Posterior vena cava (tissue), 2 donors: ENCODE measurements at regions of chr12 and their contacts with region 1.

Region 1: DNA sequence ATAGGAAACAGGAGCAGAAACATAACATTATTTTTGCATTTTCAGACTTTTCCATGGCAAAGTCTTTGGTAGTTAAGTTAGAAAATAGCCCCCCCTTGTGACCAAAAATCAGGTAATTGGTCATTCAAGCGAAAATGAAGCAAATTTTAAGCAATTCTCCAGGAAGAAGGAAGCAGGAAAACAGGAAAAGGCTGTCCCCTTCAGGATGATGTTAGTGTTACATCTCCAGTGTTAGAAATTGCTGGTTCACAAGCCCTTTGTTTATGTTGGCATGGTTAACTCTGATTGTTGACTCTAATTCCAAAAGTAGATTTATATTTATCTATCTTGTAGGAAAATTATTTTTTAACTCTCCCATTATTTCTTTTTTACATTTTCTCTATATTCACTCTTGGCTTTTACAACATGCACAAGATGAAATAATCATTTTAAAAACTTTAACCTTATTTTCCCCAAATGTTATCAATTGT is 18.8 kb upstream of the GAS2L3 start:
- DNase-seq: no peak

Region 2: DNA sequence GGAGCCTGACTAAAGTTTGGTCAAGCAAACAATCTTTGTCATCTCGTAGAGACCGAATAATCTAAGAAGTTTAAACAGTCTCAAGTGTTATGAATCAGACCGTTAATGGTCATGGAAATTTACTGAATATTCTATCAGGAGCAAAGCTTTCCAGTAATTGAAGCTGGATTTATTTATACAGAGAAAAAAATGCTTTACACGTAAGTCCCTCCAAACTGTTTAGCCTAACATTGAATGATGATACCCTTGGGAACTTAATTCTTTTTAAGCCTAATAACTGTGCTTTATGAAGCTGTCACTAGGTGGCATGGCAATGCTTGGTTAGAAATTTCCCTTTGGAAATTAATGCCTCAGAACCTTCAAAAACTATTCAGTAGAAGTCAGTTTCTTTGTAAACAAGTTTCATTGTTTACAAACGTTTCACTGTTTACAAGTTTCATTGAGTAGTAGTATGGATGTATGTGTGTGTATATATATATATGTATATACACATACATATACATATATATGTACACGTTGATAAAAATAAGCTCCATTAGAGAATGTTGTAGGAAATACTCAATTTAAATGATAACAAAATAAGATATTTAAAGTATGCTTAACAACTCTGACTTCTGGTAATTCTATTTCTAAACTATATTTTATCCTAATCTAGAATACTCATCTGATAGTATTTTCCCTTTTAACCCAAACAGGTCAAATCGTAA is 319.9 kb before region 1 on chr12:
- intact Hi-C with region 1: loop called in 1 of 2 experiments (anchors 10 kb)
- DNase-seq: no peak

Region 3: DNA sequence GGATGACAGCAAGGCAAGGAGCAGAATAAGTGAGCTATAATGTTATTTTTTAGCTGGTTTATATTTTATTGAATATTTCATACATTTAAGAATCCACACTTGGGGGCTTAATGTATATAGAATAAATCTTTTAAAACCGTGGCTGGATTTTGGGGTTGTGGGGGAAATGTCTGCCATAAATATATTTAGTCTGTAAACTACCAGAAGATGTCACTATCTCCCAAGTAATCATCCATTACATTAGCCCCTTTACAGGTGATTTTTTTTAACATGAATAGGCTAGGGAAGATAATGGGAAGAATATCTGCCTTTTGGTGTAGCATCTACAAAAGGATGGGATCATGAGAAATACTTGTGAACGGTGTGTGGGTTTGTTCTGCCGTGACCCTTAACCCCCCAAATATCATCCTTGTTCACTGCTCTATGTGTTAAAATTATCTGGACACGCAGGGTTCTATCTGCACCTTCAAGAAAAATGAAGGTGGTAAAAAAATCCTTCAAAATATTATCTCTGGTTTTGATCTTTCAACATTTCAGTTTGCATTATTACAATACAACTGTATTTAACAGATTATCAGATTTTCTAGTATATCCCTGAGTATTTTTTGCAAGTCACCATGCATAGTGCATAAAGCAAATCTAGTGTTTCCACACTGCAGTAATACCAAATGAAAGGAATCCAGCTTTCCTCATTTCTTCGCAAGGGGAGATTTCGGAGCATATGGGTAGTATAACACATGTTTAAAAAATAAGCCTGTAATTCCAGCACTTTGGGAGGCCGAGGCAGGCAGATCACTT is 205.8 kb before region 1 on chr12:
- intact Hi-C with region 1: loop called in 1 of 2 experiments (anchors 5 kb)
- DNase-seq: no peak

Region 4: DNA sequence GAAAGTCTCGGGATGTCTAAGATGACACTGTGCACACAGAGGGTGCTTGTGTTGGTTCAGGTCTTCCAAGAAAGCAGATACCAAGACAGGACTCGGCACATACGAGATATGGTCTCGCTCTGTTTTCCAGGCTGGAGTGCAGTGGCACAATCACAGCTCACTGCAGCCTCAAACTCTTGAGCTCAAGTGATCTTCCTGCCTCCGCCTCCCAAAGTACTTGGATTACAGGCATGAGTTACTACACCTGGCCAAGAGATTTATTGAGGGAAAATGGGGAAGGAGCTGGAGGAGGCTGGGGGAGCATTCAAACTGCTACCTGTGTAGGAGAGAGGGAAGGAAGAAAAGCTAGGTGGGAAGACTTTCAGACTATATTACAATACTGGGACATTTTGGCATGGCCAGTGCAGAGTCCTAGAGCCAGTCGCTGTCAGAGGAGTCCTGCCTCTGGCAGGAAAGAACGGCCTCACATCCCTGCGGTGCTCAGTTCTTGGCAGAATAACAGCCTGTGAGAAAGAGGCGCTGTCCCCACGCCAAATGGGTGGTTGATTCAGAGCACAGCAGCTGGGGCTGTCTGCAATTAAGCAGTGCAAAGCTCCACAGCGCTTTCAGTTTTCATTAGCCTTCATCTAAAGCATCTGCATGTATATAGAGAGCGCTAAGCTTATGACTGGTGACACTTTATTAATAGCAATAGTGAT is 179.5 kb before region 1 on chr12:
- intact Hi-C with region 1: loop called in 1 of 2 experiments (anchors 10 kb)
- DNase-seq: peak; percentile 85

Region 5: GRCh38 chr12:100391856-100392255 is 162.8 kb before region 1 on chr12:
- intact Hi-C with region 1: loop called in 1 of 2 experiments (anchors 10 kb)
- DNase-seq: no peak

Region 6: DNA sequence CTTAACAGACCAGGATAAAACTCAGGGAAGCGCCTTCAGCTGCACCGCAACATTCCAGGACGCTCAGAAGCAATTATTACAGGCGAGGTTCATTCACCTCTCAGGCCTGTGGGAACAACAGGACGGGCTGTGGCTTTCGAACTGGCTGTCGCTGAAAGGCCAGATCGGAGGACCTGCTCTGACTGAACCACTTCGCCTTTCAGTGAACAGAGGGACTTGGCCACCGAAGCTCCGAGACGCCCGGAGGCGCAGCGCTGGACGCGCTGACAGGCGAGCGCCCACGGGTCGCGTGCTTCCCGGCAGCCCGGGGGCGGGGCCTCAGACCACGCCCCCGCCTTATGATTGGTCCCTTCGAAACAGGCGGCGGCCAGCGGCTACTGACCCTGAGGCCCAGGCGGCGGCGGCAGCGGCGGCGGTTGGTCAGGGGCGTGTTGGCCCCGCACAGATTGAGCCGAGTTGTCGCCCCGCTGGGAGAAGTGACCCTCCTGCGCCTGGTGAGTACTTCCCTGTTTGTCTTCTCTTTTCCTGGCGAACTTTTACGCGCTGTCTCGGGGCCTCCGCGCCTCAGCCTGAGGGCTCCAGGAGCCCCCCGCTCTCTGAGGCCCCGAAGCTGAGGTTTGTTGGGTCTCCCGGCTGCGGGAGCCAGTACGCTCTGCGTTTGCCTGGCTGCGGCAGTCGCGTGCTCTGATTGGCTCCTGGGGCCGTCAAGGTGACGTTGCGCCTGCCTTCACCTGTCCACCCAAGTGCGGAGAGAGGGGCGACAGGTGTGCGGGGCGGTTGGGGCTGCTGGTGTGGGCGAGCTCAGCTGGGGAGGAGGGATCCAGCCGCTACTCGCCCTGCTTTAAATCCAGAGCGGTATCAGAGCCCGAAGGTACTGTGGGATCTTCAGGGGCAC is 18.9 kb after region 1 on chr12 and contains the start of gene GAS2L3:
- intact Hi-C with region 1: no loop called
- DNase-seq: peak; percentile 96
- total RNA-seq, gene GAS2L3: 6.9 to 9.5 TPM